ENCODE measurements at regions of chr6 and their contacts with region 1.

Region 1: GRCh38 chr6:139375232-139376016 is 976 bp upstream of the CITED2 start:
- DNase-seq: peak; percentile 71 to 93 (median 83)
- ATAC-seq: peak; percentile 63
- H3K4me3 ChIP-seq: peak overlapping the region; percentile 92 to 93
- H3K4me3 Mint-ChIP-seq: peak overlapping the region; percentile 98
- H3K27ac ChIP-seq: peak overlapping the region; percentile 76 to 94
- H3K27ac Mint-ChIP-seq: peak overlapping the region; percentile 95
- H3K4me1 ChIP-seq: peaks cover 22% of the 10 kb centered on the region
- H3K4me1 Mint-ChIP-seq: peaks cover 26% of the 10 kb centered on the region
- H3K27me3 ChIP-seq: no peaks in the 10 kb centered on the region
- H3K27me3 Mint-ChIP-seq: no peaks in the 10 kb centered on the region
- CTCF ChIP-seq: no peak

Region 2: GRCh38 chr6:138773177-138774091 is 602.0 kb before region 1 on chr6 and contains the start of gene CCDC28A:
- CTCF ChIA-PET with region 1: no interaction called
- POLR2A ChIA-PET with region 1: interaction called, 34 read pairs
- intact Hi-C with region 1: loop called (anchors 1 to 2 kb)
- DNase-seq: peak; percentile 87 to 97 (median 92)
- ATAC-seq: peak; percentile 84
- H3K4me3 ChIP-seq: peak within 1 kb of the TSS; percentile 68 to 90
- H3K4me3 Mint-ChIP-seq: peak within 1 kb of the TSS; percentile 100
- H3K27ac ChIP-seq: peak within 1 kb of the TSS; percentile 88 to 96
- H3K27ac Mint-ChIP-seq: peak within 1 kb of the TSS; percentile 100
- H3K4me1 ChIP-seq: peaks cover 19% of the 10 kb centered on the region
- H3K4me1 Mint-ChIP-seq: peaks cover 33% of the 10 kb centered on the region
- H3K27me3 ChIP-seq: no peaks in the 10 kb centered on the region
- H3K27me3 Mint-ChIP-seq: no peaks in the 10 kb centered on the region
- CTCF ChIP-seq: no peak
- total RNA-seq, gene CCDC28A: 38.2 to 39.4 TPM

Region 3: DNA sequence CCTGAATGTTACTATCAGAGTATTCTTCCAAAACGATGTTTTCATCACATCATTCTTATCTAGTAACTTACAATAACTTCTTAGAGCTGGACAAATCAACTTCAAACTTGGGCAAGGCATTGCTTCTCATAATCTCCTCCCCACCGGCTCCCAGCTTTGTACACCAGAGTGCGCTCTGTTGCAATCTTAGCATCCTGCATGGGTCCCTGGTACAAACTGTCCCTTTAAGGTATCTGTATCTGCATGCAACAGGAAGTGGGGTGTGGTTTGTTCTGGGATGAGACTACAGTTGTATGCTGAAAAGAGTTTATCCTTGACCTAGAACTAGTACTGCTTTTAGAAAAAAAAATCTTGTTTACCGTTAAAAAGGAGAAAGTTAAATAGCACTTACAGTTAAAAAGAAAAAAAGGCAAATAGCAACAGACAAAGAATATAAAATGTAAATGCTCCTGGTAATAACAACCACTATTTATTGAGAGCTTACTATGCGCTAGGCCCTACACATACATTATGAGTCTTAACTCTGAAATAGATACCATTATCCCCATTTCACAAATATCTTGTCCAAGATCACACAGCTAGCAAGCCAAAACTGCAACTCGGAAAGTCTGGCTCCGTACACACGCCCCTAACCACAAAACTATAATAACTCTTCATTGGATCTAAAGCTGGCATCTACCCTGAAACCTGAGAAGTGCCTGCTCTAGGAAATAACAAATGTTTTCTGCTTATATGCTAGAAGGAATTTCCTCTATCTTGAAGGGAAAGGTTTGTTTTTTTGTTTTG is 250.3 kb before region 1 on chr6:
- CTCF ChIA-PET with region 1: interaction called, 5 read pairs
- POLR2A ChIA-PET with region 1: interaction called, 28 read pairs
- intact Hi-C with region 1: no loop called
- DNase-seq: peak; percentile 55 to 93 (median 82)
- ATAC-seq: peak; percentile 95
- H3K4me3 ChIP-seq: peak overlapping the region; percentile 9 to 24
- H3K4me3 Mint-ChIP-seq: peak overlapping the region; percentile 59
- H3K27ac ChIP-seq: peak overlapping the region; percentile 42 to 71
- H3K27ac Mint-ChIP-seq: peak overlapping the region; percentile 93
- H3K4me1 ChIP-seq: peaks cover 30% of the 10 kb centered on the region
- H3K4me1 Mint-ChIP-seq: peaks cover 58% of the 10 kb centered on the region
- H3K27me3 ChIP-seq: no peaks in the 10 kb centered on the region
- H3K27me3 Mint-ChIP-seq: no peaks in the 10 kb centered on the region
- CTCF ChIP-seq: peak; percentile 86

Region 4: DNA sequence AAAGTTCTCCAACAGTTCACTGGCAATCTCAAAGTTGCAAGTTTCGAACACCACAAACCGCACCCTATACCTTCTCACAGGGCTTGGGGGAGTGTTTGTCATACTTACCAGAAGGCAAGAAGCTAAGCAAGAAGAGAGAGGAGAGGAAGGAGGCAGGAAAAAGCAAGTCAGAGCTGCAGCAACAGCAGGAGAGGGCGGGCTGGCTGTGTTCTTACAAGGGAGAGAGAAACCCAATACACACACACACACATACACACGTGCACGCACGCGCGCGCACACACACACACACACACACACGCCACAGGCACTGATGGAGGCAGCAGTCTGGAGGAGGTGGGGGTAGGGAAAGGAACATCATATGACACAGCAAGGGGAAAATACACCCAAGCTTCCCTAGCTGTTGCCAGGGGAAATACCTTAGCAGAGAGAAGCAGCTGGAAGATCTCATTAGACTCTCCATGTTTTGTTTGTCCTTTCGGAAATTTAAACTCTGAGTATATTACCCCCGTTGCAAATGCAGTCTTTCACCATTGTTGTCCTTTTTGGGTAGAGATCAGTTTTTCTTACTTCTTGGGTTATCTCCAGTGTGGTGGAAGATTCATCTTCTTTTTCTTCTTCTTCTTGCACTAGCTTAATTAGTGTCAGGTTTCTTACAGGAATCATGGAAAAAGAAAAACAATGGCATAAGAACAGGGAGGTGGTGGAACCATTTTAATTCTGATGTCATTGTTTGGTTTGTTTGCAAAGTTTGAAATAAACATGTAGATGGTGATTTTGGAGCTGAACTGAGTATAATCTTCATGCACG is 83.4 kb before region 1 on chr6 and contains the start of gene TXLNB:
- CTCF ChIA-PET with region 1: interaction called, 8 read pairs
- POLR2A ChIA-PET with region 1: interaction called, 44 read pairs
- intact Hi-C with region 1: loop called in 1 of 2 experiments (anchors 1 kb)
- DNase-seq: peak; percentile 55 to 92 (median 80)
- ATAC-seq: peak; percentile 85
- H3K4me3 ChIP-seq: peak within 1 kb of the TSS; percentile 16 to 34
- H3K4me3 Mint-ChIP-seq: peak within 1 kb of the TSS; percentile 77
- H3K27ac ChIP-seq: peak within 1 kb of the TSS; percentile 77 to 82
- H3K27ac Mint-ChIP-seq: peak within 1 kb of the TSS; percentile 96
- H3K4me1 ChIP-seq: peaks cover 39% of the 10 kb centered on the region
- H3K4me1 Mint-ChIP-seq: peaks cover 66% of the 10 kb centered on the region
- H3K27me3 ChIP-seq: no peaks in the 10 kb centered on the region
- H3K27me3 Mint-ChIP-seq: no peaks in the 10 kb centered on the region
- CTCF ChIP-seq: no peak
- total RNA-seq, gene TXLNB: 0.22 to 0.72 TPM

Region 5: DNA sequence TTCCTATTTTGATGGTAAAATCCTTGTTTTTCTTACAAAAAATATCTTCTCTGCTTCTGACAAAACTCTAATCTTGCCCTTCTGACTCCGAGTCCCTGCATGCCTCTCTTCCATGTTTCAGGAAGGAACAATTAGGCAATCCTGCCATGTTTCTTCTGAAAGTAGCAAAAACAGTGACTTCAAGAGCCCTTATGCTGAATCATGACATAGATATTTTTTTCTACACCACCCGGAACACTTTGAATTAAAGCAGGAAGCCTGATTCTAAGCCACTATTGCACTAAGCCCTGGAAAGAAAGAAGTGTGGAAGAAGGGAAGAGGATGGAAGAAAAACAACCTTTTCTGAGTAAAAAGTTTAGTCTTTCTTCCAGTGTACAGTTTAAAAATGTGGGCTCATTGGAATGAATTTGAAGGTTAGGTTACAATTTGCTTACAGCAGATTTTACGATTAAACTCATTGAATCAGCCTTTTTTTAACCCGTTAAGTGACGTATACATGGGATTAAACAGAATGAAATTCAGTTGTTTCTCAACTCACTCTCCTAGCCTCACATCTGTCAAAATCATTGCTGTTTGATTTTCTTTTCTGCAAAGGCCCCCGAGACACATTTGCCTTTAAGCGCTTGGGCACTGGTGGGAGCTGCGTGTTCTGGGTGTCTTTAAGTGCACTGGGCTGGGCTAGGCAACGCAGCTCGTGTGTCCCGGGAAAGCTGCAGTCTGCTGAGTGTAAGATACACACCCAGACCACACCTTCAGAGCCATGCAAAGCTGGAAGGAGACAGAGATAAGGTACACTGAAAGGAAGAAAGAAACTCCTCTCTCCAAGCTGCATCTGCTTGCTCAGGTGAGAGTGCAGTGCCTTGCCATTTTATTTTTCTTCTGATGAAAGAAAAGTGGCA is 158.4 kb after region 1 on chr6:
- CTCF ChIA-PET with region 1: interaction called, 3 read pairs
- POLR2A ChIA-PET with region 1: interaction called, 17 read pairs
- intact Hi-C with region 1: loop called (anchors 5 kb)
- DNase-seq: no peak
- ATAC-seq: no peak
- H3K4me3 ChIP-seq: no peak overlapping the region
- H3K4me3 Mint-ChIP-seq: peak overlapping the region; percentile 55
- H3K27ac ChIP-seq: peak overlapping the region; percentile 29 to 73
- H3K27ac Mint-ChIP-seq: peak overlapping the region; percentile 81
- H3K4me1 ChIP-seq: peaks cover 12% of the 10 kb centered on the region
- H3K4me1 Mint-ChIP-seq: peaks cover 47% of the 10 kb centered on the region
- H3K27me3 ChIP-seq: no peaks in the 10 kb centered on the region
- H3K27me3 Mint-ChIP-seq: no peaks in the 10 kb centered on the region
- CTCF ChIP-seq: no peak

Region 6: GRCh38 chr6:139895205-139895793 is 519.9 kb after region 1 on chr6:
- CTCF ChIA-PET with region 1: interaction called, 8 read pairs
- POLR2A ChIA-PET with region 1: interaction called, 7 read pairs
- intact Hi-C with region 1: loop called in 1 of 2 experiments (anchors 10 kb)
- DNase-seq: peak in 1 of 9 experiments; percentile 5
- ATAC-seq: no peak
- H3K4me3 ChIP-seq: no peak overlapping the region
- H3K4me3 Mint-ChIP-seq: no peak overlapping the region
- H3K27ac ChIP-seq: no peak overlapping the region
- H3K27ac Mint-ChIP-seq: no peak overlapping the region
- H3K4me1 ChIP-seq: no peaks in the 10 kb centered on the region
- H3K4me1 Mint-ChIP-seq: no peaks in the 10 kb centered on the region
- H3K27me3 ChIP-seq: no peaks in the 10 kb centered on the region
- H3K27me3 Mint-ChIP-seq: peaks cover 10% of the 10 kb centered on the region
- CTCF ChIP-seq: no peak